Dendritic cell treated with granulocyte-macrophage colony-stimulating factor and Interleukin-4, amounts not matched to agents 40 ng/mL and 50 ng/mL, for 4 days (primary cell): ENCODE measurements at regions of chr9 and their contacts with region 1.

Region 1: GRCh38 chr9:80679916-80680315 is 1009.4 kb downstream of the TLE1 start:
- H3K4me3 Mint-ChIP-seq: no peak overlapping the region
- H3K27ac Mint-ChIP-seq: no peak overlapping the region
- H3K4me1 Mint-ChIP-seq: no peaks in the 10 kb centered on the region
- H3K27me3 Mint-ChIP-seq: no peaks in the 10 kb centered on the region

Region 2: DNA sequence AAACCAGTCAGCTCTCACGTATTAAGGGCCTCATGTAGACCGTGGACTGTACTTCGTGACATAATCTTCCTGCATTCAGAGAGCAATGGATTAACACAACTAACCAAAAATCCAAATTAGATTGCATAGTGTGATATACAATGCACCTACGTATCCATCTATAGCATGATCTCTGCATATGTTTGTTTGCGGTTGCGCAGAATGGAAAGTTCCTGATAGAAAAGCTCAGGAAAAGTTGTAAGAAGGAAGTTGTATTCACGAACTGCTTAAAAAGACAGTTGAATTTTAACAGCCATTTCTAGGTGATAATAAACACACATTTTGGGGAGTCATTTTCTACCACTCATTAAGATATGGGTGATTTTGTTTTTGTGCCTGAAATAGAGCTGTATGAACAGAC is 239.2 kb before region 1 on chr9:
- intact Hi-C with region 1: no loop called
- H3K4me3 Mint-ChIP-seq: no peak overlapping the region
- H3K27ac Mint-ChIP-seq: no peak overlapping the region
- H3K4me1 Mint-ChIP-seq: no peaks in the 10 kb centered on the region
- H3K27me3 Mint-ChIP-seq: no peaks in the 10 kb centered on the region

Region 3: DNA sequence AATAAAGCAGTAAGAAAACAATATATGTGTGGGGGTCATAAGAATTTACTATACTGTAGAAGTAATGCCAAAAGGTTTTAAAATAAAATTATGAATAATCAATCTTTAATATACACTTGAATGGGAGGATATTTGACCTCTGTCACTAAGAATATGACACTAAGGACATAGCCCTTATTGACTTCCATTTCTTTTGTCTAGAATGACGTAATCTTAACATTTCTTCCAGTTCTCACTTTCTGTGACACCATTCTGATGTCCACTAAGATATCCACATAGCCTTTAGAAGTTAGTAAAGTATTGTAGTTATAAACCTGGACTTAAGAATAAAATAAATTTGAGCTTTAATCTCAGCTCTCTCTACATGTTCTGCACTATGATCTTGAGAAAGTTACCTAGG is 57.4 kb before region 1 on chr9:
- intact Hi-C with region 1: loop called (anchors 10 kb)
- H3K4me3 Mint-ChIP-seq: no peak overlapping the region
- H3K27ac Mint-ChIP-seq: no peak overlapping the region
- H3K4me1 Mint-ChIP-seq: no peaks in the 10 kb centered on the region
- H3K27me3 Mint-ChIP-seq: no peaks in the 10 kb centered on the region

Region 4: GRCh38 chr9:81759668-81760215 is 1079.8 kb after region 1 on chr9:
- intact Hi-C with region 1: no loop called
- H3K4me3 Mint-ChIP-seq: no peak overlapping the region
- H3K27ac Mint-ChIP-seq: no peak overlapping the region
- H3K4me1 Mint-ChIP-seq: no peaks in the 10 kb centered on the region
- H3K27me3 Mint-ChIP-seq: no peaks in the 10 kb centered on the region